ENCODE measurements at regions of chr13 and their contacts with region 1.

Region 1: GRCh38 chr13:46553886-46554858 is 1.2 kb downstream of the LRCH1 start:
- DNase-seq: peak; percentile 49 to 63
- H3K4me3 ChIP-seq: peak overlapping the region; percentile 89
- H3K27ac ChIP-seq: peak overlapping the region; percentile 30
- H3K4me1 ChIP-seq: peaks cover 23% of the 10 kb centered on the region
- H3K27me3 ChIP-seq: no peaks in the 10 kb centered on the region
- CTCF ChIP-seq: peak; percentile 33; the same call in 1 of the 2 replicates

Region 2: GRCh38 chr13:46492946-46493345 is 61.2 kb before region 1 on chr13:
- CTCF ChIA-PET with region 1: no interaction called
- POLR2A ChIA-PET with region 1: no interaction called
- intact Hi-C with region 1: loop called (anchors 2 kb)
- DNase-seq: peak in 1 of 2 experiments; percentile 8
- H3K4me3 ChIP-seq: no peak overlapping the region
- H3K27ac ChIP-seq: no peak overlapping the region
- H3K4me1 ChIP-seq: no peaks in the 10 kb centered on the region
- H3K27me3 ChIP-seq: no peaks in the 10 kb centered on the region
- CTCF ChIP-seq: peak; percentile 71

Region 3: GRCh38 chr13:46655377-46656180 is 101.4 kb after region 1 on chr13:
- CTCF ChIA-PET with region 1: no interaction called
- POLR2A ChIA-PET with region 1: no interaction called
- intact Hi-C with region 1: loop called (anchors 5 kb)
- DNase-seq: peak; percentile 18 to 45
- H3K4me3 ChIP-seq: no peak overlapping the region
- H3K27ac ChIP-seq: no peak overlapping the region
- H3K4me1 ChIP-seq: no peaks in the 10 kb centered on the region
- H3K27me3 ChIP-seq: no peaks in the 10 kb centered on the region
- CTCF ChIP-seq: no peak

Region 4: DNA sequence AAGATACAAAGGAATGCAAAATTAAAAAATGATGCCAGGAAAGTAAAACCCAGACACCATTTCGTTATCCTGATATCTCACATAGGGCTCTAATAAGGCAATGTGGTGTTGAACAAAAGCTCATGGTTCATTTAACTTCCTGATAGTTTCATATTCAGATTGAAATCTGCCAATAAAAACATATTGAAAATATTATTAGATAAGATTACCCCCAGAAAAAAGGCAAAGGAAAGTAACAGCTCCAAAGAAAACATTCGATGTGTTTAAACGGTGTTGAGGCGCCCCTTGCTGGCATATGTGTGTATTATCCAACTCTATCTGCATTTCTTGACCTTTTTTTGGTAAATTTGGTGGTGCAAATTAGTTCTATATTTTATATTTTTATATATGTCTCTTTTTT is 166.9 kb after region 1 on chr13:
- CTCF ChIA-PET with region 1: interaction called, 14 read pairs
- POLR2A ChIA-PET with region 1: no interaction called
- intact Hi-C with region 1: loop called (anchors 1 kb)
- DNase-seq: peak; percentile 28 to 37
- H3K4me3 ChIP-seq: no peak overlapping the region
- H3K27ac ChIP-seq: no peak overlapping the region
- H3K4me1 ChIP-seq: no peaks in the 10 kb centered on the region
- H3K27me3 ChIP-seq: no peaks in the 10 kb centered on the region
- CTCF ChIP-seq: peak; percentile 88

Region 5: DNA sequence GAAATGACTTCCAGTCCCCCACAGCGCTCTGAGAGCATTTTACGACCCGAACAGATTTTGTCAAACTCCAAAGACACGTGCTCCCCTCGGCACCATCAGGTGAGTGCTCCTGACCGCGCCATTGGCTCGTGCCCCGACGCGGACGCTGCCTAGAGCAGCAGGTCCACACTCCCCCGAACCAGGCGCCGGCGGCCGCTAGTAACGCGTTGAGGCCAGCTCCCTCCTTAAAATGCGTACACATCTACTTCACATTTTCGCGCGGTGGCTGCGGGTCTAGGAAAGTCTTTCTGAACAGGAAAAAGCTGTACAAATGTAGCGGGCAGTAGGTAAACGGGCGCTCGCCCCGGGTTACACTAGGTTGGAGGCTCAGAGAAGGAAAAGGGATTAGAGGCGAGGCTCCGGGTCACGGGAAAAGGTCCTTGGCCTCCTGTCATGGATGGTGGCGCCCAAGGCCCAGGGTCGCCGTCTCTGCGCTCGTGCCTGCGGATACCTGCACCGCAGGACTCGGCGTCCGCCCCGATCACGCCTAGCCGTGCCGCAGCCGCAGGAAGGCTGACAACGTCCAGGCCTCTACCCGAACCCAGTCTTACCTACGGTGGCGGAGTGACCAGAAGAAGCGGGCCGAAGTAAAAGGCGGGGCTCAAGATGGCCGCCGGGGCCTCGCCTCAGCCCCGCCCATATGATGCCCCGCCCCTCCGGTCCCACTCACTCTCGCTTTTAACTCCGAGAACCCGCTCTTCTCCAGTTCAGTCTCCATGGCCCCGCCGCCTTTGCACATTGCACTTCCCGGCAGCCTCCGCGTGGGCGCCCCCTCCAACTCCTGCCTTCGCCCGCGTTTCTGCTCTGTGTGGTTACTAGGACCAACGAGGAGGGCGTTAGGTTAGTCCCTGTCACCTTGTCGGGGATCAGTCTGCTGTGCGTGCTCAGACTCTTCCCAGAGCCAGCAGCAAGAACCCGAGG is 242.6 kb after region 1 on chr13 and contains the start of gene ESD:
- CTCF ChIA-PET with region 1: no interaction called
- POLR2A ChIA-PET with region 1: no interaction called
- intact Hi-C with region 1: loop called (anchors 10 kb)
- DNase-seq: peak; percentile 68 to 82
- H3K4me3 ChIP-seq: peak within 1 kb of the TSS; percentile 92
- H3K27ac ChIP-seq: peak within 1 kb of the TSS; percentile 61
- H3K4me1 ChIP-seq: peaks cover 11% of the 10 kb centered on the region; the same call in 1 of the 2 replicates
- H3K27me3 ChIP-seq: no peaks in the 10 kb centered on the region
- CTCF ChIP-seq: no peak
- total RNA-seq, gene ESD: 48.7 and 58.5 TPM in 2 replicates

Region 6: GRCh38 chr13:47632311-47632710 is 1078.1 kb after region 1 on chr13:
- CTCF ChIA-PET with region 1: no interaction called
- POLR2A ChIA-PET with region 1: no interaction called
- intact Hi-C with region 1: no loop called
- DNase-seq: no peak
- H3K4me3 ChIP-seq: no peak overlapping the region
- H3K27ac ChIP-seq: no peak overlapping the region
- H3K4me1 ChIP-seq: no peaks in the 10 kb centered on the region
- H3K27me3 ChIP-seq: no peaks in the 10 kb centered on the region
- CTCF ChIP-seq: no peak